HEK293 (cell line): ENCODE measurements at regions of chr18 and their contacts with region 1.

Region 1: GRCh38 chr18:30971338-30971956 is 71.1 kb downstream of the DSC3 start:
- H3K4me3 ChIP-seq: no peak overlapping the region
- H3K27ac ChIP-seq: no peak overlapping the region
- H3K4me1 ChIP-seq: no peaks in the 10 kb centered on the region
- CTCF ChIP-seq: no peak

Region 2: GRCh38 chr18:30982285-30982992 is 11.0 kb after region 1 on chr18:
- CTCF ChIA-PET with region 1: interaction called, 25 read pairs
- POLR2A ChIA-PET with region 1: no interaction called
- H3K4me3 ChIP-seq: no peak overlapping the region
- H3K27ac ChIP-seq: no peak overlapping the region
- H3K4me1 ChIP-seq: no peaks in the 10 kb centered on the region
- CTCF ChIP-seq: no peak

Region 3: GRCh38 chr18:31563778-31564177 is 592.3 kb after region 1 on chr18:
- CTCF ChIA-PET with region 1: interaction called, 41 read pairs
- POLR2A ChIA-PET with region 1: no interaction called
- H3K4me3 ChIP-seq: no peak overlapping the region
- H3K27ac ChIP-seq: no peak overlapping the region
- H3K4me1 ChIP-seq: no peaks in the 10 kb centered on the region
- CTCF ChIP-seq: no peak